ENCODE measurements at regions of chr20 and their contacts with region 1.

Region 1: GRCh38 chr20:9616833-9617489 is 102.6 kb downstream of the LAMP5 start:
- DNase-seq: peak; percentile 61
- ATAC-seq: peak; percentile 74
- H3K4me3 Mint-ChIP-seq: no peak overlapping the region
- H3K27ac Mint-ChIP-seq: no peak overlapping the region
- H3K4me1 Mint-ChIP-seq: peaks cover 3% of the 10 kb centered on the region; the same call in 1 of the 2 replicates
- H3K27me3 Mint-ChIP-seq: no peaks in the 10 kb centered on the region
- CTCF ChIP-seq: peak; percentile 80

Region 2: GRCh38 chr20:9407805-9408421 is 209.0 kb before region 1 on chr20:
- CTCF ChIA-PET with region 1: interaction called, 102 read pairs
- POLR2A ChIA-PET with region 1: no interaction called
- DNase-seq: peak; percentile 73
- ATAC-seq: peak; percentile 91
- H3K4me3 Mint-ChIP-seq: no peak overlapping the region
- H3K27ac Mint-ChIP-seq: no peak overlapping the region
- H3K4me1 Mint-ChIP-seq: no peaks in the 10 kb centered on the region
- H3K27me3 Mint-ChIP-seq: no peaks in the 10 kb centered on the region
- CTCF ChIP-seq: peak; percentile 76

Region 3: GRCh38 chr20:9503526-9504245 is 113.3 kb before region 1 on chr20:
- CTCF ChIA-PET with region 1: interaction called, 10 read pairs
- POLR2A ChIA-PET with region 1: no interaction called
- DNase-seq: peak; percentile 44
- ATAC-seq: no peak; the same call in 1 of the 2 replicates
- H3K4me3 Mint-ChIP-seq: no peak overlapping the region
- H3K27ac Mint-ChIP-seq: no peak overlapping the region
- H3K4me1 Mint-ChIP-seq: peaks cover 26% of the 10 kb centered on the region
- H3K27me3 Mint-ChIP-seq: peaks cover 64% of the 10 kb centered on the region
- CTCF ChIP-seq: no peak

Region 4: GRCh38 chr20:9884061-9884460 is 267.1 kb after region 1 on chr20:
- CTCF ChIA-PET with region 1: interaction called, 48 read pairs
- POLR2A ChIA-PET with region 1: no interaction called
- DNase-seq: peak; percentile 14
- ATAC-seq: peak; percentile 94
- H3K4me3 Mint-ChIP-seq: no peak overlapping the region
- H3K27ac Mint-ChIP-seq: no peak overlapping the region
- H3K4me1 Mint-ChIP-seq: peaks cover 6% of the 10 kb centered on the region
- H3K27me3 Mint-ChIP-seq: no peaks in the 10 kb centered on the region
- CTCF ChIP-seq: peak; percentile 36; the same call in 1 of the 2 replicates

Region 5: GRCh38 chr20:9912858-9913434 is 296.0 kb after region 1 on chr20:
- CTCF ChIA-PET with region 1: interaction called, 18 read pairs
- POLR2A ChIA-PET with region 1: no interaction called
- DNase-seq: peak; percentile 43
- ATAC-seq: peak; percentile 48; the same call in 1 of the 2 replicates
- H3K4me3 Mint-ChIP-seq: no peak overlapping the region
- H3K27ac Mint-ChIP-seq: no peak overlapping the region
- H3K4me1 Mint-ChIP-seq: no peaks in the 10 kb centered on the region
- H3K27me3 Mint-ChIP-seq: no peaks in the 10 kb centered on the region; the same call in none of the 2 replicates
- CTCF ChIP-seq: peak; percentile 66; the same call in 1 of the 2 replicates

Region 6: DNA sequence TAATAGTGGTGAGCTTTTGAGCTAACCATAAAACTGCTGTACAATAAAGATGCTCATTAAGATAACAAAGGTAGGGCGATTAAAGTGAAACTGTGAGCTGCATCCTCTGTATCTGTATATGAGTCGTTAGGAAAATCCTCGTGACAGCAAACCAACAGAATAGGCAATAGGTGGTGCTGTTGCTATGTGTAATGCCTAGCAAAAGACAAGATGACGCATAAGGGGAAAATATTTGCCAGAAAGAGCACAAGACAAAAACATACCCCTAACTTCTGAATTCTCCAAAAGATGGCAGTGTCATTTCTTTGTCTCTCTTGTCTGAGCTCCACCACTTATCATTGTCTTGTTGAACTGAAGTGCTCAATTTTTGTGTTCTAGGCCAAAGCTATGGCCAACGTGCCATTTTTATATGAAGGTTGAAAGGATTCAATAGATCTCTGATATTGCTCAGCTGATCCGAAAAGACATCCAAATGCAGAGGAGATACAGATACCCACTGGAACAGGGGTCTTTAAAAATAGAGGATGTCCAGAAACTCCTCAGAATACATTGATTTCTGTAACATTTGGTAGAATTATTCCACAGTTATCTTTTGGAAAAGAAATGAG is 361.5 kb after region 1 on chr20:
- CTCF ChIA-PET with region 1: interaction called, 27 read pairs
- POLR2A ChIA-PET with region 1: no interaction called
- DNase-seq: no peak
- ATAC-seq: peak; percentile 84
- H3K4me3 Mint-ChIP-seq: no peak overlapping the region
- H3K27ac Mint-ChIP-seq: no peak overlapping the region
- H3K4me1 Mint-ChIP-seq: peaks cover 4% of the 10 kb centered on the region
- H3K27me3 Mint-ChIP-seq: no peaks in the 10 kb centered on the region
- CTCF ChIP-seq: peak; percentile 36; the same call in 1 of the 2 replicates

Region 7: GRCh38 chr20:10090588-10091166 is 473.7 kb after region 1 on chr20:
- CTCF ChIA-PET with region 1: interaction called, 19 read pairs
- POLR2A ChIA-PET with region 1: no interaction called
- DNase-seq: peak; percentile 39
- ATAC-seq: peak; percentile 91
- H3K4me3 Mint-ChIP-seq: no peak overlapping the region
- H3K27ac Mint-ChIP-seq: no peak overlapping the region
- H3K4me1 Mint-ChIP-seq: peaks cover 23% of the 10 kb centered on the region
- H3K27me3 Mint-ChIP-seq: no peaks in the 10 kb centered on the region
- CTCF ChIP-seq: peak; percentile 51